OCI-LY7 (cell line): ENCODE measurements at regions of chrX and their contacts with region 1.

Region 1: DNA sequence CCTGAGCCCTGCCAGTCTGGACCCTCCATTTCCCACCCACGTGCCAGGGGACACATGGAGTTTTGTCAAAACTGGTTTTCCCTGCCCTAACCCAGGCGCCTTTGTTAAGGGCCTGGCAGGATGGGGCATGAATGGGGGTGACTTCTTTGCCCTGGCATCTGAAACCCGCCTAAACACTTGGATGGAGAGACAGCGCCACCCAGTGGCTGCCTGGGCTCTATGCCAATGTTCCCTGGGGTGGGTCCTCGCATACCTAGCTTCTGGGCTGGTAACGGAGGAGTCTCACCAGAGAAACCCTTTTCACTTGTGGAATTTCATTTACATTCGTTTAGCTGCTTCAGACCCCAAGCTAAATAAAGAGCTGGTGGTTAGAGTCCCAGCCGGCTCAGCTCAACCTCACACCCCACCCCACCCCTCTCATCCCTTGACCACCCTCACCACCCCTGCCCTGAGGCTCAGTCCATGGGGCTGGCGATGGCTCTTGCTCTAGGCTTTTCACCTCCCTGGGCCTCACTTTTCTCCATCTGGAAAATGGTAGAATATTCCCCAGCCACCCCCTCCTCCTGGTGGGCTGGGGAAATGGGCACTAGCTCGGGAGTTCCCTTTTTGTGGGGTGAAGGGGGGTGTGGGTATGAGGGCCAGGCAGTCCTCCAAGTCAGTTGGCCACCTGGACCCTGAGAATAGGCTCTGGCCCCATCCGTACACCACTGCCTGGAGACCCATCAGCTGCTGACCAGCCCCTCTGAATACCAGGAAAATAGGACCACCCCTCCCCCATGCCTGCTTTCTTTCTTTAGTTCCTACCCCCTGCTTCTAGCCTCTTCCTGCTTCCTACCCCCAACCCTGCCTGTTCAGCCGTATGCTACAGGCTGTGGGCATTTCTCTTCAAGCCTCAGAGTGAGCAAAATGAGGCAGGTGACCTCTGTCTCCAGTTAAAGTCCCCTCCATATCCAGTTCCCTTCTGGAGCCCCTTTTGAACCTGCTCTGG is 57.1 kb upstream of the PJA1 start:
- DNase-seq: peak; percentile 63
- H3K4me3 ChIP-seq: no peak overlapping the region
- H3K27ac ChIP-seq: no peak overlapping the region
- H3K4me1 ChIP-seq: no peaks in the 10 kb centered on the region
- CTCF ChIP-seq: peak; percentile 77

Region 2: GRCh38 chrX:68732906-68733493 is 489.4 kb before region 1 on chrX:
- CTCF ChIA-PET with region 1: no interaction called
- POLR2A ChIA-PET with region 1: no interaction called
- intact Hi-C with region 1: loop called (anchors 2 kb)
- DNase-seq: peak; percentile 44
- H3K4me3 ChIP-seq: no peak overlapping the region
- H3K27ac ChIP-seq: no peak overlapping the region
- H3K4me1 ChIP-seq: no peaks in the 10 kb centered on the region
- CTCF ChIP-seq: peak; percentile 69

Region 3: GRCh38 chrX:68828740-68829552 is 393.5 kb before region 1 on chrX and contains the start of gene EFNB1:
- CTCF ChIA-PET with region 1: no interaction called
- POLR2A ChIA-PET with region 1: interaction called, 3 read pairs
- intact Hi-C with region 1: loop called (anchors 1 kb)
- DNase-seq: peak; percentile 92
- H3K4me3 ChIP-seq: peak within 1 kb of the TSS; percentile 80
- H3K27ac ChIP-seq: no peak within 1 kb of the TSS
- H3K4me1 ChIP-seq: peaks cover 9% of the 10 kb centered on the region
- CTCF ChIP-seq: no peak
- total RNA-seq, gene EFNB1: 1.8 and 2.0 TPM in 2 replicates

Region 4: GRCh38 chrX:69093960-69094871 is 128.2 kb before region 1 on chrX:
- CTCF ChIA-PET with region 1: no interaction called
- POLR2A ChIA-PET with region 1: no interaction called
- intact Hi-C with region 1: loop called (anchors 2 kb)
- DNase-seq: peak; percentile 52
- H3K4me3 ChIP-seq: no peak overlapping the region
- H3K27ac ChIP-seq: no peak overlapping the region
- H3K4me1 ChIP-seq: no peaks in the 10 kb centered on the region
- CTCF ChIP-seq: peak; percentile 70

Region 5: GRCh38 chrX:69158166-69158980 is 64.0 kb before region 1 on chrX:
- CTCF ChIA-PET with region 1: no interaction called
- POLR2A ChIA-PET with region 1: no interaction called
- intact Hi-C with region 1: loop called (anchors 5 kb)
- DNase-seq: peak; percentile 55
- H3K4me3 ChIP-seq: no peak overlapping the region
- H3K27ac ChIP-seq: no peak overlapping the region
- H3K4me1 ChIP-seq: peaks cover under 1% of the 10 kb centered on the region
- CTCF ChIP-seq: peak; percentile 69

Region 6: GRCh38 chrX:69173906-69174305 is 48.5 kb before region 1 on chrX:
- CTCF ChIA-PET with region 1: no interaction called
- POLR2A ChIA-PET with region 1: no interaction called
- intact Hi-C with region 1: no loop called
- DNase-seq: no peak
- H3K4me3 ChIP-seq: no peak overlapping the region
- H3K27ac ChIP-seq: no peak overlapping the region
- H3K4me1 ChIP-seq: no peaks in the 10 kb centered on the region
- CTCF ChIP-seq: no peak